CD4-positive, alpha-beta memory T cell (primary cell): ENCODE measurements at regions of chr17 and their contacts with region 1.

Region 1: GRCh38 chr17:80892019-80892855 is 99.4 kb upstream of the CHMP6 start:
- DNase-seq: peak; percentile 74 to 98 (median 82)
- H3K4me3 ChIP-seq: peak overlapping the region in 1 of 2 donors; percentile 17
- H3K4me3 Mint-ChIP-seq: peak overlapping the region; percentile 55 to 92 (median 84)
- H3K27ac ChIP-seq: peak overlapping the region; percentile 85
- H3K27ac Mint-ChIP-seq: peak overlapping the region; percentile 93 to 98 (median 96)
- H3K4me1 ChIP-seq: peaks cover 50% of the 10 kb centered on the region
- H3K4me1 Mint-ChIP-seq: peaks cover 33 to 71% (median 51%) of the 10 kb centered on the region in 4 donors
- H3K27me3 ChIP-seq: no peaks in the 10 kb centered on the region
- H3K27me3 Mint-ChIP-seq: no peaks in the 10 kb centered on the region

Region 2: GRCh38 chr17:80454557-80455335 is 437.5 kb before region 1 on chr17:
- CTCF ChIA-PET with region 1: no interaction called
- POLR2A ChIA-PET with region 1: interaction called, 17 read pairs
- intact Hi-C with region 1: no loop called
- DNase-seq: peak; percentile 92 to 96 (median 95)
- H3K4me3 ChIP-seq: peak overlapping the region; percentile 42 to 66
- H3K4me3 Mint-ChIP-seq: peak overlapping the region; percentile 89 to 93 (median 92)
- H3K27ac ChIP-seq: peak overlapping the region; percentile 93
- H3K27ac Mint-ChIP-seq: peak overlapping the region; percentile 92 to 98 (median 96)
- H3K4me1 ChIP-seq: peaks cover 18% of the 10 kb centered on the region
- H3K4me1 Mint-ChIP-seq: peaks cover 9 to 25% (median 12%) of the 10 kb centered on the region in 4 donors
- H3K27me3 ChIP-seq: no peaks in the 10 kb centered on the region
- H3K27me3 Mint-ChIP-seq: peaks cover 14 to 17% of the 10 kb centered on the region in 2 donors

Region 3: DNA sequence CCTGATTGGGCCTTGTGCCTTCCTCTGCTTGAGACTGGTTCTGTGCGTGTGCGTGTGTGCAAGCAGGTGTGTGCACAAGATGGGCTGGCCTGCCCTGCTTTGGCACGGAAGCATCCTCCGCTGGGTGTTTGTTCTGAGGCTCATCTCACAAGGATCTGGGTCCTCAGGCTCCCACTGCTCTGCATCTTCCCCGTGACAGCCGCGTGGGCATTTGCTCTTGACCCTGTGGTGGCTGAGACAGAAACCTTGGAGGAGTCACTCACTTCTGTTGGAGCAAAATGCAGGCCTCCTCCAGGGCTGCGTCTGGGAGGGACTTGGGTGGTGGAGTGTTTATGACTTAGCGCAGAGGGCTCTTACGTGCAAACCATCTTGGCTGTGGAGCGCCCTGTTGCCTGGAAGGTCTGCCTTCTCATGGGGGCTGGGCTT is 228.4 kb before region 1 on chr17:
- CTCF ChIA-PET with region 1: no interaction called
- POLR2A ChIA-PET with region 1: no interaction called
- intact Hi-C with region 1: loop called (anchors 10 kb)
- DNase-seq: peak in 4 of 5 donors; percentile 19 to 45 (median 36)
- H3K4me3 ChIP-seq: no peak overlapping the region
- H3K4me3 Mint-ChIP-seq: peak overlapping the region in 7 of 8 donors; percentile 41 to 96 (median 76)
- H3K27ac ChIP-seq: peak overlapping the region; percentile 62
- H3K27ac Mint-ChIP-seq: peak overlapping the region; percentile 91 to 98 (median 93)
- H3K4me1 ChIP-seq: peaks cover 63% of the 10 kb centered on the region
- H3K4me1 Mint-ChIP-seq: peaks cover 51 to 74% (median 66%) of the 10 kb centered on the region in 4 donors
- H3K27me3 ChIP-seq: no peaks in the 10 kb centered on the region
- H3K27me3 Mint-ChIP-seq: no peaks in the 10 kb centered on the region

Region 4: GRCh38 chr17:80761110-80761871 is 130.9 kb before region 1 on chr17:
- CTCF ChIA-PET with region 1: no interaction called
- POLR2A ChIA-PET with region 1: interaction called, 18 read pairs
- intact Hi-C with region 1: loop called (anchors 5 kb)
- DNase-seq: peak; percentile 45 to 87 (median 53)
- H3K4me3 ChIP-seq: peak overlapping the region in 1 of 2 donors; percentile 27
- H3K4me3 Mint-ChIP-seq: peak overlapping the region; percentile 73 to 87 (median 80)
- H3K27ac ChIP-seq: peak overlapping the region; percentile 49
- H3K27ac Mint-ChIP-seq: peak overlapping the region; percentile 89 to 96 (median 94)
- H3K4me1 ChIP-seq: peaks cover 72% of the 10 kb centered on the region
- H3K4me1 Mint-ChIP-seq: peaks cover 59 to 86% (median 73%) of the 10 kb centered on the region in 4 donors
- H3K27me3 ChIP-seq: no peaks in the 10 kb centered on the region
- H3K27me3 Mint-ChIP-seq: no peaks in the 10 kb centered on the region

Region 5: GRCh38 chr17:80871341-80871740 is 20.9 kb before region 1 on chr17:
- CTCF ChIA-PET with region 1: no interaction called
- POLR2A ChIA-PET with region 1: interaction called, 10 read pairs
- intact Hi-C with region 1: loop called (anchors 1 kb)
- DNase-seq: peak in 2 of 5 donors; percentile 26 to 28
- H3K4me3 ChIP-seq: peak overlapping the region in 1 of 2 donors; percentile 23
- H3K4me3 Mint-ChIP-seq: peak overlapping the region; percentile 41 to 82 (median 72)
- H3K27ac ChIP-seq: no peak overlapping the region
- H3K27ac Mint-ChIP-seq: peak overlapping the region; percentile 36 to 83 (median 67)
- H3K4me1 ChIP-seq: peaks cover 38% of the 10 kb centered on the region
- H3K4me1 Mint-ChIP-seq: peaks cover 33 to 58% (median 45%) of the 10 kb centered on the region in 4 donors
- H3K27me3 ChIP-seq: no peaks in the 10 kb centered on the region
- H3K27me3 Mint-ChIP-seq: no peaks in the 10 kb centered on the region

Region 6: GRCh38 chr17:80876950-80877728 is 15.1 kb before region 1 on chr17:
- CTCF ChIA-PET with region 1: interaction called, 3 read pairs
- POLR2A ChIA-PET with region 1: interaction called, 16 read pairs
- intact Hi-C with region 1: no loop called
- DNase-seq: peak in 3 of 5 donors; percentile 28 to 45 (median 43)
- H3K4me3 ChIP-seq: peak overlapping the region; percentile 14 to 51
- H3K4me3 Mint-ChIP-seq: peak overlapping the region; percentile 79 to 92 (median 87)
- H3K27ac ChIP-seq: peak overlapping the region; percentile 29
- H3K27ac Mint-ChIP-seq: peak overlapping the region; percentile 60 to 95 (median 91)
- H3K4me1 ChIP-seq: peaks cover 33% of the 10 kb centered on the region
- H3K4me1 Mint-ChIP-seq: peaks cover 20 to 51% (median 35%) of the 10 kb centered on the region in 4 donors
- H3K27me3 ChIP-seq: no peaks in the 10 kb centered on the region
- H3K27me3 Mint-ChIP-seq: no peaks in the 10 kb centered on the region

Region 7: GRCh38 chr17:80938556-80938955 is 46.3 kb after region 1 on chr17:
- CTCF ChIA-PET with region 1: no interaction called
- POLR2A ChIA-PET with region 1: interaction called, 3 read pairs
- intact Hi-C with region 1: loop called (anchors 2 kb)
- DNase-seq: peak; percentile 51 to 74 (median 56)
- H3K4me3 ChIP-seq: no peak overlapping the region
- H3K4me3 Mint-ChIP-seq: peak overlapping the region; percentile 21 to 82 (median 78)
- H3K27ac ChIP-seq: peak overlapping the region; percentile 5
- H3K27ac Mint-ChIP-seq: peak overlapping the region; percentile 45 to 92 (median 89)
- H3K4me1 ChIP-seq: peaks cover 28% of the 10 kb centered on the region
- H3K4me1 Mint-ChIP-seq: peaks cover 18 to 35% (median 25%) of the 10 kb centered on the region in 4 donors
- H3K27me3 ChIP-seq: no peaks in the 10 kb centered on the region
- H3K27me3 Mint-ChIP-seq: no peaks in the 10 kb centered on the region